ENCODE measurements at regions of chr17 and their contacts with region 1.

Region 1: GRCh38 chr17:8894673-8895578 is 27.5 kb upstream of the PIK3R6 start:
- DNase-seq: peak; percentile 73
- ATAC-seq: peak; percentile 39
- H3K4me3 Mint-ChIP-seq: no peak overlapping the region
- H3K27ac Mint-ChIP-seq: peak overlapping the region; percentile 20
- H3K4me1 Mint-ChIP-seq: peaks cover 68% of the 10 kb centered on the region
- H3K27me3 Mint-ChIP-seq: no peaks in the 10 kb centered on the region

Region 2: GRCh38 chr17:8753976-8754440 is 140.9 kb before region 1 on chr17:
- CTCF ChIA-PET with region 1: no interaction called
- POLR2A ChIA-PET with region 1: no interaction called
- intact Hi-C with region 1: loop called in 1 of 2 experiments (anchors 2 kb)
- DNase-seq: no peak
- ATAC-seq: no peak
- H3K4me3 Mint-ChIP-seq: no peak overlapping the region
- H3K27ac Mint-ChIP-seq: no peak overlapping the region
- H3K4me1 Mint-ChIP-seq: no peaks in the 10 kb centered on the region
- H3K27me3 Mint-ChIP-seq: peaks cover 15% of the 10 kb centered on the region

Region 3: GRCh38 chr17:8798846-8799569 is 95.9 kb before region 1 on chr17 and contains the start of gene MFSD6L:
- CTCF ChIA-PET with region 1: no interaction called
- POLR2A ChIA-PET with region 1: no interaction called
- intact Hi-C with region 1: loop called in 1 of 2 experiments (anchors 5 kb)
- DNase-seq: peak; percentile 37
- ATAC-seq: peak; percentile 49
- H3K4me3 Mint-ChIP-seq: no peak within 1 kb of the TSS
- H3K27ac Mint-ChIP-seq: no peak within 1 kb of the TSS
- H3K4me1 Mint-ChIP-seq: no peaks in the 10 kb centered on the region
- H3K27me3 Mint-ChIP-seq: no peaks in the 10 kb centered on the region
- total RNA-seq, gene MFSD6L: 0.07 TPM

Region 4: DNA sequence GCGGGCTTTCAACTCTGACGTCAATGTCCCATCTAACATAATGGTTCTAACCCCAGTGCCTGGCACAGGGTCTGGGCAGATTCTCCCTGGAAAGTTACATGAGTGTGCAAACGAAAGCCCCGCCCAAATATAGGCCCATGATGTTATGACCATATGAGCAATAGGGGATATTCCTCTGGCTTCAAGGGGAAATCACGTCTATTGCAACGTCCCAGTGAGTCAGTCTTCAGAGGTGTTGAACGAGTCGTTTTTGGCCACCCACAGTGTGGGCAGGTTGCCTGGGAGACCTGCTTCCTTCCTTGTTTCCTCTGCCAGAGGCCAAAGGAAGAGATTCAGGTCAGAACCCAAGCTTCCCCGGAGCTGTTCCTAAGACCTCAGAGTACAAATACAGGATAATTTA is 40.3 kb after region 1 on chr17:
- CTCF ChIA-PET with region 1: interaction called, 4 read pairs
- POLR2A ChIA-PET with region 1: no interaction called
- intact Hi-C with region 1: loop called in 1 of 2 experiments (anchors 1 kb)
- DNase-seq: peak; percentile 89
- ATAC-seq: peak; percentile 80
- H3K4me3 Mint-ChIP-seq: peak overlapping the region; percentile 42
- H3K27ac Mint-ChIP-seq: peak overlapping the region; percentile 94
- H3K4me1 Mint-ChIP-seq: peaks cover 66% of the 10 kb centered on the region
- H3K27me3 Mint-ChIP-seq: no peaks in the 10 kb centered on the region

Region 5: GRCh38 chr17:8965394-8966168 is 70.7 kb after region 1 on chr17 and contains the start of gene PIK3R5:
- CTCF ChIA-PET with region 1: interaction called, 10 read pairs
- POLR2A ChIA-PET with region 1: no interaction called
- intact Hi-C with region 1: loop called (anchors 1 to 2 kb)
- DNase-seq: peak; percentile 91
- ATAC-seq: peak; percentile 76
- H3K4me3 Mint-ChIP-seq: peak within 1 kb of the TSS; percentile 81
- H3K27ac Mint-ChIP-seq: peak within 1 kb of the TSS; percentile 87
- H3K4me1 Mint-ChIP-seq: peaks cover 46% of the 10 kb centered on the region
- H3K27me3 Mint-ChIP-seq: no peaks in the 10 kb centered on the region
- total RNA-seq, gene PIK3R5: 20.4 to 29.2 TPM